AG04449 (cell line): ENCODE measurements at regions of chr20 and their contacts with region 1.

Region 1: GRCh38 chr20:4592316-4593148 is 129.2 kb upstream of the PRND start:
- DNase-seq: no peak
- H3K4me3 ChIP-seq: peak overlapping the region; percentile 57
- CTCF ChIP-seq: peak; percentile 81

Region 2: DNA sequence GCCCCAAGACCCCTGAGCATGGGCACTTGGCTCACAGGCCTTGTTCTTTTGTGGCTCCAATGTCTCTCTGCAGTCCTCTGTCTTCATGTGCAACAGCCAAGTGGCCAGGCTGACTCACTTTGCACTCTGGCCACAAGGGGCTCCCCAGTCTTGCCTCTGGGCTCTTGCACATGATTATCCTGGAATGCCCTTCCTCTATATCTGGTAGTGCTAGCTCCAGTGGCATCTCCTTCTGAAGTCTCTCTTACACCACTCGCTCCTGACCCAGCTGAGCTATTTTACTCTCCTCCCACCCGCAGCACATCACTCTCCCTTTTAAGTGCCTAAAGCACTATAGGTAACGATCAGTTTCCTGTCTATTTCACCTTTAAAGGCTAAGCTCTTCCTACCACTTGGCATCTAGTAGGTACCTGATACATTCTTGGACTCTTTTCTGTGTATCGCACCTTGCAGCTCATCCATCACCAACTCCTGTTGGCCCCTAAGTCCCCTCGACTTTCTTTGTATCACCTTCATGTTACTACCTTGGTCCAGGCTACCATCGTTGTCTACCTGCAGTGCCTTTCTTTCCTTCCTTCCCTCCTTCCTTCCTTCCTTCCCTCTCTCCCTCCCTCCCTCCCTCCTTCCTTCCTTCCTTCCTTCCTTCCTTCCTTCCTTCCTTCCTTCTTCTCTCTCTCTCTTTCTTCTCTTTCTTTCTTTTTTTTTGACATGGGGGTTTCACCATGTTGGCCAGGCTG is 365.3 kb before region 1 on chr20:
- CTCF ChIA-PET with region 1: interaction called, 23 read pairs
- POLR2A ChIA-PET with region 1: no interaction called
- DNase-seq: no peak
- H3K4me3 ChIP-seq: no peak overlapping the region
- CTCF ChIP-seq: peak; percentile 66

Region 3: GRCh38 chr20:4252005-4252404 is 340.5 kb before region 1 on chr20:
- CTCF ChIA-PET with region 1: interaction called, 37 read pairs
- POLR2A ChIA-PET with region 1: no interaction called
- DNase-seq: no peak
- H3K4me3 ChIP-seq: no peak overlapping the region
- CTCF ChIP-seq: no peak

Region 4: DNA sequence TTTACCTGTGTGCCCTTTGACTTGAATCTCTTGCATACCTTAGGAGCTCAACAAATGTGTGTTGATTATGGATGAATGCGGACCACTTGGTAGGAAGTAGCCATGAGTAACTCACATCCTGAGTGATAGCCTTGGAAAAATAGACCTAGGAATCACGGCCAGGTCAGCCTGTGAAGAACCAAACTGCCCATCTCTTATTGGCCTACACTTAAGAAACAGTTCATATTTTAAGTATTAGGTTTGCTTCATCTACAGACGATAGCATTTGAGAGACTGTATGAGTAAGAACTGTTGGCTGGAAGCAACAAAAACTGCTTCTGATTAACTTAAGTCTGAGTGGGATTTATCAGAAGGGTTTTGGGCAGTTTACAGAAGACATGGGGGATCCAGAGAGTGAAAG is 190.9 kb before region 1 on chr20:
- CTCF ChIA-PET with region 1: interaction called, 10 read pairs
- POLR2A ChIA-PET with region 1: no interaction called
- DNase-seq: peak; percentile 29
- H3K4me3 ChIP-seq: no peak overlapping the region
- CTCF ChIP-seq: no peak

Region 5: DNA sequence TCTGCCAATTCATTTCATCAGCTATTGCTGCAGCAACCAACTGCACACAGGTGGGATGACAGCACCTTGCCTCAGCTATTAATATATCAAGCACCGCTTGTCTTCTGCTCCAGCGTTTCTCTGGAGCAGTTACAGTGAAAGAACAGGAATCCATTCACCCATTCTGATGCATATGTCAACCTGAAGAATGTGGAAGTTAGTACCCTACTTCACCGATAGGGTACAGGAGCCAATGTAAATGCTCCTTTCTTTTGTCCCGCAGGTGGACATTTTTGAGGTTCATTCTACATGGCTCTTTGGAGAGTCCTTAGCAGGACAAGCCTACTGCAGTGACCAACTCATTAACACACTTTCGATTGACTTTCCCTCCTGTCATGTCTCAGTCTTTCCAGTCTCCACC is 10.7 kb before region 1 on chr20:
- CTCF ChIA-PET with region 1: interaction called, 11 read pairs
- POLR2A ChIA-PET with region 1: no interaction called
- DNase-seq: no peak
- H3K4me3 ChIP-seq: no peak overlapping the region
- CTCF ChIP-seq: no peak